ENCODE measurements at regions of chr2 and their contacts with region 1.

Region 1: GRCh38 chr2:196200557-196200956 is 29.2 kb upstream of the STK17B start:
- DNase-seq: peak; percentile 41
- H3K4me3 Mint-ChIP-seq: peak overlapping the region; percentile 54
- H3K27ac Mint-ChIP-seq: peak overlapping the region; percentile 87
- H3K4me1 Mint-ChIP-seq: peaks cover 49% of the 10 kb centered on the region
- H3K27me3 Mint-ChIP-seq: no peaks in the 10 kb centered on the region

Region 2: GRCh38 chr2:196177124-196177523 is 23.4 kb before region 1 on chr2:
- intact Hi-C with region 1: loop called (anchors 1 kb)
- DNase-seq: no peak
- H3K4me3 Mint-ChIP-seq: peak overlapping the region; percentile 69
- H3K27ac Mint-ChIP-seq: peak overlapping the region; percentile 90
- H3K4me1 Mint-ChIP-seq: peaks cover 80% of the 10 kb centered on the region
- H3K27me3 Mint-ChIP-seq: no peaks in the 10 kb centered on the region

Region 3: GRCh38 chr2:196182439-196183171 is 18.0 kb before region 1 on chr2:
- intact Hi-C with region 1: loop called (anchors 1 kb)
- DNase-seq: no peak
- H3K4me3 Mint-ChIP-seq: peak overlapping the region; percentile 16
- H3K27ac Mint-ChIP-seq: peak overlapping the region; percentile 91
- H3K4me1 Mint-ChIP-seq: peaks cover 60% of the 10 kb centered on the region
- H3K27me3 Mint-ChIP-seq: no peaks in the 10 kb centered on the region

Region 4: GRCh38 chr2:196233805-196234475 is 33.4 kb after region 1 on chr2:
- intact Hi-C with region 1: loop called (anchors 1 kb)
- DNase-seq: no peak
- H3K4me3 Mint-ChIP-seq: peak overlapping the region; percentile 35
- H3K27ac Mint-ChIP-seq: peak overlapping the region; percentile 83
- H3K4me1 Mint-ChIP-seq: peaks cover 93% of the 10 kb centered on the region
- H3K27me3 Mint-ChIP-seq: no peaks in the 10 kb centered on the region

Region 5: GRCh38 chr2:196263181-196263747 is 62.7 kb after region 1 on chr2:
- intact Hi-C with region 1: loop called (anchors 1 kb)
- DNase-seq: peak; percentile 57
- H3K4me3 Mint-ChIP-seq: peak overlapping the region; percentile 65
- H3K27ac Mint-ChIP-seq: peak overlapping the region; percentile 88
- H3K4me1 Mint-ChIP-seq: peaks cover 79% of the 10 kb centered on the region
- H3K27me3 Mint-ChIP-seq: no peaks in the 10 kb centered on the region

Region 6: DNA sequence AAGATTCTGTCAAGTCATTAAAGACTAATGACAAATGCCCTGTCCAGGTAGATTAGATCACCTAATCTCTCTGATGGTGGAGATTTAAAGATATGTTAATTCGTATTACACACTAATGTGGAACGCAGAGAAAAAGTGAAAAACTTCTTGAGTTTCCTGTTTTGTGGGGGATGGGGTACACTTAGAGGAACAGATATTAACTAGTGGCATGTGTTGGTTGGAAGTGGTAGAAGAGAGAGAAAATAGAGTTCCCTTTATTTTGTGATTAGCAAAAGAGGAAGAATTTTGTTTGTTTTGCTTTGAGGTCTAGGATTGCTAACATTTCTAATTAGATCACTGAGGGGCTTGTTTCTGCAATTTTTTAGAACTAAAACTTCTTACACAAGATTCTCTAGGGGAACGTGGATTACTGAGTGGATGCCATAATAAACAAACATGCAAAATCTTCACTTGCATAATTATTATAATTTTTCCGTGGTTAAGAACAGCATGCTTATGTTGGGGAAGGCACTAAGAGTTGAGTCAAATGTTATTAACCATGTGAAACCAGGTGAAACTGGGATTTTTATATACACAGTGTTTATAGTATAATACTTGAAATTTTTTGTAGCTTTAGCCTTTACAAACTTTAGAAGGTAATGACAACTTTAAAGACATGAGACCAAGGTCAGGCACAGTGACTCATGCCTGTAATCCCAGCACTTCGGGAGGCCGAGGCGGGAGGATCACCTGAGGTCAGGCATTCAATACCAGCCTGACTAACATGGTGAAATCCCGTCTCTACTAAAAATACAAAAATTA is 68.2 kb after region 1 on chr2:
- intact Hi-C with region 1: loop called (anchors 1 kb)
- DNase-seq: no peak
- H3K4me3 Mint-ChIP-seq: peak overlapping the region; percentile 25
- H3K27ac Mint-ChIP-seq: peak overlapping the region; percentile 29
- H3K4me1 Mint-ChIP-seq: peaks cover 57% of the 10 kb centered on the region
- H3K27me3 Mint-ChIP-seq: no peaks in the 10 kb centered on the region

Region 7: DNA sequence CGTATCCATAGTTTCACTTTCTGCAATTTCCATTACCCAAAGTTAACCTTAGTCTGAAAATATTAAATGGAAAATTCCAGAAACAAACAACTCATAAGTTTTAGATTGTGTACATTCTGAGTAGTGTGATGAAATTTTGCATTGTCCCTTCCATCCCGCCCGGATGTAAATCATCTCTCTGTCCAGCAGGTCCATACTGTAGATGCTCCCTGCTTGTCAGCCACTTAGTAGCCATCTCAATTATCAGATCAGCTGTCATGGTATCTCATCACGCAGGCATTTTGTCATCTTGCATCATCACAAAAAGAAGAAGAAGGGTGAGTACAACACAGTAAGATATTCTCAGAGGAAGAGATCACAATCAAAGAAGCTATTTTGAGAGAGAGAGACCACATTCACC is 155.8 kb after region 1 on chr2:
- intact Hi-C with region 1: no loop called
- DNase-seq: no peak
- H3K4me3 Mint-ChIP-seq: no peak overlapping the region
- H3K27ac Mint-ChIP-seq: no peak overlapping the region
- H3K4me1 Mint-ChIP-seq: no peaks in the 10 kb centered on the region
- H3K27me3 Mint-ChIP-seq: peaks cover 2% of the 10 kb centered on the region

Region 8: GRCh38 chr2:196535742-196536141 is 335.2 kb after region 1 on chr2:
- intact Hi-C with region 1: no loop called
- DNase-seq: no peak
- H3K4me3 Mint-ChIP-seq: no peak overlapping the region
- H3K27ac Mint-ChIP-seq: no peak overlapping the region
- H3K4me1 Mint-ChIP-seq: peaks cover 26% of the 10 kb centered on the region
- H3K27me3 Mint-ChIP-seq: peaks cover 4% of the 10 kb centered on the region

Region 9: GRCh38 chr2:196742685-196743084 is 542.1 kb after region 1 on chr2:
- intact Hi-C with region 1: no loop called
- DNase-seq: no peak
- H3K4me3 Mint-ChIP-seq: no peak overlapping the region
- H3K27ac Mint-ChIP-seq: no peak overlapping the region
- H3K4me1 Mint-ChIP-seq: no peaks in the 10 kb centered on the region
- H3K27me3 Mint-ChIP-seq: no peaks in the 10 kb centered on the region